RWPE1 (cell line): ENCODE measurements at regions of chr20 and their contacts with region 1.

Region 1: DNA sequence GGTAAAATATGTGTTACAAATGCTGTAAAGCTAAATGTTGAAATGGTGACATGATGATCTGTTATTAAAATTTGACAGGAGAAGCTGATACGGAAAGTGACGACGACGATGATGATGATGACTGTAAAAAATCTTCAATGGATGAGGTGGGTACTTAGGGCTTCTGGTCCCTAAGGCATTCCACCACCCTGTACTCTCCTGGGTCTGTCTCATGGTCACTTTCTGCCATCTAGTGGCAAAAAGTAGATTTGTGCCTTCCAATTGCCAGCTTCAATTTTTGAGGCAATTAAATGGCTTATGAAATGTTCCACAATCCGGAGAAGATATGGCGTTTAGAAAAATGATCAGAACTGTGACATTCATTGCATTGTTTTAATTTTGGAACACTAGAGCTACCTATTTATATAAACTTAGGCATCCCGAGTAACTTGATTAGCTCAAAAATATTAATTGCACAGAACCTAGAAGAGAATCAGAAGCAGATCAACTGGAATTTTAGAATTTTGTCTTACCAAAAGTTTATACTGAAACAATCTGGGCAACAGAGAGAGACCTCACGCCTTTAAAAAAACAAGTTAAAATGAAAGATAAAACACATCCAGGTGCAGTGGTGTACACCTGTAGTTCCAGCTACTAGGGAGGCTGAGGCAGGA is 346.5 kb upstream of the PLCB4 start:
- DNase-seq: peak; percentile 51
- H3K27ac ChIP-seq: no peak overlapping the region
- CTCF ChIP-seq: peak; percentile 93

Region 2: DNA sequence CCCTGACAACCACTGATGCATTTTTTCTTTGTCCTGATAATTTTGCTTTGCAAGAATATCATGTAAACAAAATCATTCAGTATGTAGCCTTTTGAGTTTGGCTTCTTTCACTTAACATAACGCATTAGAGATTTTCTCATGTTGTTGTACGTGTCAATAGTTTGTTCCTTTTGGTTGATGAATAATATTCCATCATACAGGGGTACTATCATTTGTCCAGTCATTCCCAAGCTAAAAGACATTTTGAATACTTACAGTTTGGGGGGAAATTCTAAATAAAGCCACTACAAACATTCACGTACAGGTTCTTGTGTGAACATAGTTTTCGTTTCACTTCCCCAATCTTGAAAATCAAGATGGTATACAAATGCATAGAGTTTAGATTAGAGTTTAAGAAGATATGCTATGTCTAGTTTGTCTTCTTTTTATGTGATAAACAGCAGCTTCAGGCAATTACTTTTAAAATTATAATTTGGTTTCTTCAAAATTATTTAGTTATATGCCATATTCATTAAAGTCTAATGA is 787.3 kb before region 1 on chr20:
- CTCF ChIA-PET with region 1: interaction called, 43 read pairs
- POLR2A ChIA-PET with region 1: no interaction called
- DNase-seq: no peak
- H3K27ac ChIP-seq: no peak overlapping the region
- CTCF ChIP-seq: no peak

Region 3: DNA sequence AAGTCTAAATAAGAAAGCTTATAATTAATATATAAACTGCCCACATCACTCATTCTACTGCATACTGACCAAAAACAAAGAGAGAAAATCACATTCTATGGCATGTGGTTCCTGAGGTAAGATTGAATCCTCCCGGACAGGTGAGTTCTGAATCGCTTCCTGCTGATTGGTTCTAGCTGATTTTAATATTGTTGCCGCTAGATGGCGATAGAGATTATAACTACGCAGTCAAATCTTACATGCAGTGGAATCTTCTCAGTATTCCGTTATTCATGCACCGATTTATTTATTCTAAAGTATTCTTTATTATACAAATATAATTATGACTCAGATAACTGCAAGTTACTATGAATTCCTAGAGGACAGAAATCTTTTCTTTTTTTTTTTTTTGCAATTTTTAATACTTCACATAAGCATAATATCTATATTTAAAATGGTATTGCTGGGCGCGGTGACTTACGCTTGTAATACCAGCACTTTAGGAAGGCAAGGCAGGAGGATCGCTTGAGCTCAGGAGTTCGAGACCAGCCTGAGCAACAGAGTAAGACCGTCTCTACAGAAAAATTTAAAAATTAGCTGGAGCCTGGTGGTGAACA is 678.6 kb before region 1 on chr20:
- CTCF ChIA-PET with region 1: interaction called, 34 read pairs
- POLR2A ChIA-PET with region 1: no interaction called
- DNase-seq: peak; percentile 66
- H3K27ac ChIP-seq: no peak overlapping the region
- CTCF ChIP-seq: peak; percentile 83

Region 4: GRCh38 chr20:8131598-8132483 is 590.6 kb before region 1 on chr20 and contains the start of gene PLCB1:
- CTCF ChIA-PET with region 1: interaction called, 42 read pairs
- POLR2A ChIA-PET with region 1: no interaction called
- DNase-seq: peak; percentile 74
- H3K27ac ChIP-seq: peak within 1 kb of the TSS; percentile 66
- CTCF ChIP-seq: peak; percentile 97

Region 5: GRCh38 chr20:8583566-8584043 is 138.8 kb before region 1 on chr20:
- CTCF ChIA-PET with region 1: no interaction called
- POLR2A ChIA-PET with region 1: no interaction called
- DNase-seq: no peak
- H3K27ac ChIP-seq: no peak overlapping the region
- CTCF ChIP-seq: no peak

Region 6: GRCh38 chr20:8709627-8710026 is 12.8 kb before region 1 on chr20:
- CTCF ChIA-PET with region 1: interaction called, 10 read pairs
- POLR2A ChIA-PET with region 1: no interaction called
- DNase-seq: no peak
- H3K27ac ChIP-seq: no peak overlapping the region
- CTCF ChIP-seq: no peak

Region 7: GRCh38 chr20:8842525-8842924 is 120.1 kb after region 1 on chr20:
- CTCF ChIA-PET with region 1: no interaction called
- POLR2A ChIA-PET with region 1: no interaction called
- DNase-seq: no peak
- H3K27ac ChIP-seq: no peak overlapping the region
- CTCF ChIP-seq: no peak